ENCODE measurements at regions of chr11 and their contacts with region 1.

Region 1: GRCh38 chr11:57249384-57250319 is 12.6 kb upstream of the APLNR start:
- DNase-seq: no peak
- ATAC-seq: peak; percentile 78
- H3K4me3 ChIP-seq: no peak overlapping the region
- H3K27ac ChIP-seq: no peak overlapping the region
- H3K4me1 ChIP-seq: no peaks in the 10 kb centered on the region
- H3K27me3 ChIP-seq: no peaks in the 10 kb centered on the region; a peak in 1 of 4 replicates
- CTCF ChIP-seq: peak; percentile 76 to 84 (median 83)
- EP300 ChIP-seq: no peak
- POLR2A ChIP-seq: no peak
- RAD21 ChIP-seq: peak; percentile 77

Region 2: GRCh38 chr11:55942785-55943392 is 1306.8 kb before region 1 on chr11:
- CTCF ChIA-PET with region 1: interaction called, 5 read pairs
- POLR2A ChIA-PET with region 1: no interaction called
- RAD21 ChIA-PET with region 1: no interaction called
- SMC1A ChIA-PET with region 1: no interaction called
- in situ Hi-C with region 1: loop called (anchors 25 kb)
- intact Hi-C with region 1: loop called (anchors 2 kb)
- DNase-seq: no peak
- ATAC-seq: peak; percentile 61; the same call in 2 of the 3 replicates
- H3K4me3 ChIP-seq: no peak overlapping the region
- H3K27ac ChIP-seq: no peak overlapping the region
- H3K4me1 ChIP-seq: no peaks in the 10 kb centered on the region
- H3K27me3 ChIP-seq: no peaks in the 10 kb centered on the region
- CTCF ChIP-seq: peak; percentile 37 to 61 (median 38); a peak in 4 of 6 replicates
- EP300 ChIP-seq: no peak
- POLR2A ChIP-seq: no peak
- RAD21 ChIP-seq: peak; percentile 58

Region 3: DNA sequence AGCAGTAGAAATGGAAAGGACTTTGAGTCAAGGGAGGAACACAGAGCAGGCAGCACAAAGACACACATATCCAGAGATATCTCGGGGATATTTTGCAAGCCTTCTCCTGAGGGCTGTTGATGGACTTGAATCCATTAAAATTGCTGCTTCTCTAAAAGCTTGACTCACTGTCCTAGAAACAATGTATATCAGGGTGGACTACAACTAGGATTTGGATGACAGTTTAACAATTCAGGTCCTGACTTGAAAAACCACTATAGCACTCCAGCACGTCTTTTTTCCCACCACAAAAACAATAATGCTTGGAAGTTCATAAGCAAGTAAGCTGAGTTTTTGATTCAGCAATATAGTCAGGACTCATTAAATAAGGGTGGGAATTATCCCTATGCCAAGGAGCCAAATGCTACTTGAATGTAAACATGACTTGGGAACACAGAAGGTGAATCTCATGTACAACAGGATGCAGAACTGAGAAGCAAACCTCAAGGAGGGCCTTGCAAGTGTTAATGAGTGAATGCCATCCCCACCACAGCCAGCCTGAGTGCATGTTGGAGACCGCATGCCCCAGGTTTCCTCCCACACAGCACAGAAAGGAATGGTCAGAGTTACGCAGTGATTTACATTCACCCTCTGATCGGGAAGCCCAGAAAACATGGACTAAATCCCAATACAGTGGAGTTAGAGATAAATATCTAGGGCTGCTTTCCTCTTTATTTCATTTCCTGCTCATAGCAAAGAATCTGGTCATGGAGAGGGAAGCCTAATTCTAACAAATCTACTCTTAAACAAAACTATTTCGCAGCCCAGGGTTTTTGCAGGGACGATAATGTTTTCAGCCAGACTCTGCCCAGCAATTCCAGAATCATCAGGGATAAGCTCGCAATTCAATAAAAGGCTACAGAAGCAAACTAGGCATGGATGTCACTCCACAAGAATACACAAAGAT is 402.7 kb before region 1 on chr11:
- CTCF ChIA-PET with region 1: interaction called, 184 read pairs
- POLR2A ChIA-PET with region 1: no interaction called
- RAD21 ChIA-PET with region 1: interaction called, 75 read pairs
- SMC1A ChIA-PET with region 1: interaction called, 61 read pairs
- in situ Hi-C with region 1: loop called (anchors 5 kb)
- intact Hi-C with region 1: no loop called
- DNase-seq: no peak
- ATAC-seq: no peak
- H3K4me3 ChIP-seq: no peak overlapping the region
- H3K27ac ChIP-seq: no peak overlapping the region
- H3K4me1 ChIP-seq: no peaks in the 10 kb centered on the region
- H3K27me3 ChIP-seq: no peaks in the 10 kb centered on the region
- CTCF ChIP-seq: no peak
- EP300 ChIP-seq: no peak
- POLR2A ChIP-seq: no peak
- RAD21 ChIP-seq: no peak

Region 4: DNA sequence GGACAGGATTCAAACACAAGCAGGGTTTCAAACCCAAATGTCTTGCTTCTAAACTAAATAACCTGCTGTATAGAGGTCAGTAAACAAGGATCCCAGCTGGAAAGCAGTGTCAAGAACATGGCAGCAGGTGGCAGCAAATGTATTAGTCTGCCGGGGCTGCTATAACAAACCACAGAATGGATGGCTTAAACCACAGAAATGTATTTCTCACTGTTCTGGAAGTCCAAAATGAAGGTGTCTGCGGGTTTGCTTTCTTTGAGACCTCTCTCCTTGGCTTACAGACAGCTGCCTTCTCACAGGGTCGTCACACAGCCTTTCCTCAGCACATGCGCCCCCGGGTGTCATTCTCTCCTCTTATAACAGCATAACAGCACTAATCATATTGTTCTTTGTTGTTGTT is 133.0 kb before region 1 on chr11:
- CTCF ChIA-PET with region 1: interaction called, 83 read pairs
- POLR2A ChIA-PET with region 1: no interaction called
- RAD21 ChIA-PET with region 1: interaction called, 23 read pairs
- SMC1A ChIA-PET with region 1: interaction called, 19 read pairs
- in situ Hi-C with region 1: loop called (anchors 5 kb)
- intact Hi-C with region 1: loop called (anchors 1 kb)
- DNase-seq: no peak
- ATAC-seq: peak; percentile 82
- H3K4me3 ChIP-seq: no peak overlapping the region
- H3K27ac ChIP-seq: no peak overlapping the region
- H3K4me1 ChIP-seq: no peaks in the 10 kb centered on the region
- H3K27me3 ChIP-seq: no peaks in the 10 kb centered on the region; a peak in 1 of 4 replicates
- CTCF ChIP-seq: peak; percentile 50 to 59 (median 50)
- EP300 ChIP-seq: no peak
- POLR2A ChIP-seq: no peak
- RAD21 ChIP-seq: peak; percentile 56

Region 5: GRCh38 chr11:57131080-57131790 is 118.4 kb before region 1 on chr11:
- CTCF ChIA-PET with region 1: interaction called, 13 read pairs
- POLR2A ChIA-PET with region 1: no interaction called
- RAD21 ChIA-PET with region 1: interaction called, 4 read pairs
- SMC1A ChIA-PET with region 1: interaction called, 8 read pairs
- in situ Hi-C with region 1: no loop called
- intact Hi-C with region 1: loop called (anchors 1 kb)
- DNase-seq: no peak
- ATAC-seq: peak; percentile 47; the same call in 1 of the 3 replicates
- H3K4me3 ChIP-seq: no peak overlapping the region
- H3K27ac ChIP-seq: no peak overlapping the region
- H3K4me1 ChIP-seq: no peaks in the 10 kb centered on the region
- H3K27me3 ChIP-seq: peaks cover 1 to 2% of the 10 kb centered on the region in 2 experiments; a peak in 2 of 4 replicates
- CTCF ChIP-seq: peak; percentile 21 to 34 (median 26); a peak in 3 of 6 replicates
- EP300 ChIP-seq: no peak
- POLR2A ChIP-seq: no peak
- RAD21 ChIP-seq: peak; percentile 43

Region 6: GRCh38 chr11:57260937-57261783 is 11.5 kb after region 1 on chr11:
- CTCF ChIA-PET with region 1: interaction called, 14 read pairs
- POLR2A ChIA-PET with region 1: no interaction called
- RAD21 ChIA-PET with region 1: no interaction called
- SMC1A ChIA-PET with region 1: interaction called, 17 read pairs
- in situ Hi-C with region 1: no loop called
- intact Hi-C with region 1: no loop called
- DNase-seq: no peak
- ATAC-seq: peak; percentile 30
- H3K4me3 ChIP-seq: no peak overlapping the region
- H3K27ac ChIP-seq: no peak overlapping the region
- H3K4me1 ChIP-seq: no peaks in the 10 kb centered on the region
- H3K27me3 ChIP-seq: no peaks in the 10 kb centered on the region
- CTCF ChIP-seq: no peak
- EP300 ChIP-seq: no peak
- POLR2A ChIP-seq: no peak
- RAD21 ChIP-seq: no peak

Region 7: DNA sequence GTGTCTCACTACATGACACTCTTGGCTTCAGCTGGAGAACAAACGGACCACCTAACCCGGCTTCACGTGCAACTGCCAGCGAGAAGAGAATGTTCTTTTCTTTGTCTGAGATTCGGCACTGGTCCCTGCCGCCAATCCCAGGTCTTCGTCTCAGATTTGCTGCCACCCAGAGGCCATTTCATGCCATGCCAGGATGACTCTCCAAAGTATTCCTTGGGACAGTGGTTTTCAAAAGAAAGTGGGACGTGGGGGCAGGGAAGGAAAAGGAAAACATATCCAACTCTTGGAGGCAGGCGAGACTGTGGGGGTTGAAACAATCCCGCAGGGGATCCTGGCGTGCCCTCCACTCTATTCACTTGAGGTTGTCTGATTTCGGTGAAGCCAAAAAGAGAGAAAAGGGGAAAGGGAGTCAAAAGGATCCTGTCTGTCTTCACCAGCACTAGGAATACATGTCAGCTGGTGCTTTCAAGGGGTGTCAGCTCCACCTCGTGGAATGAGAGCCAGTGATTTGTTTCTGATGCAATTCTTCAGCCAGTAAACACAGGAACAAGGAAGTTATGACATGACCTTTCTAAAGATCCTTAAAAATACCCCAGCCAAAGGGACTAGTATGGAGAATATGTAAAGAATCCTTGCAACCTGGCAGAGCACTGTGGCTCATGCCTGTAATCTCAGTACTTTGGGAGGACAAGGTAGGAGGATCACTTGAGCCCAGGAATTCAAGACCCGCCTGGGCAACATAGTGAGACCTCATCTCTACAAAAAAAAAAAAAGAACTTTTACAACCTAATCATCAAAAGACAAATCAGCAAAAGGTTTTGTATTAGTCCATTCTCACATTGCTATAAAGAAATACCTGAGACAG is 28.4 kb after region 1 on chr11:
- CTCF ChIA-PET with region 1: interaction called, 16 read pairs
- POLR2A ChIA-PET with region 1: no interaction called
- RAD21 ChIA-PET with region 1: interaction called, 5 read pairs
- SMC1A ChIA-PET with region 1: interaction called, 3 read pairs
- in situ Hi-C with region 1: no loop called
- intact Hi-C with region 1: no loop called
- DNase-seq: no peak
- ATAC-seq: peak; percentile 90
- H3K4me3 ChIP-seq: no peak overlapping the region
- H3K27ac ChIP-seq: no peak overlapping the region
- H3K4me1 ChIP-seq: no peaks in the 10 kb centered on the region
- H3K27me3 ChIP-seq: peaks cover 0 to 5% of the 10 kb centered on the region in 2 experiments; a peak in 1 of 4 replicates
- CTCF ChIP-seq: peak; percentile 79 to 84 (median 83)
- EP300 ChIP-seq: no peak
- POLR2A ChIP-seq: no peak
- RAD21 ChIP-seq: peak; percentile 64

Region 8: GRCh38 chr11:57453543-57454177 is 204.0 kb after region 1 on chr11:
- CTCF ChIA-PET with region 1: no interaction called
- POLR2A ChIA-PET with region 1: no interaction called
- RAD21 ChIA-PET with region 1: no interaction called
- SMC1A ChIA-PET with region 1: no interaction called
- in situ Hi-C with region 1: no loop called
- intact Hi-C with region 1: no loop called
- DNase-seq: no peak
- ATAC-seq: no peak
- H3K4me3 ChIP-seq: no peak overlapping the region
- H3K27ac ChIP-seq: no peak overlapping the region
- H3K4me1 ChIP-seq: peaks cover 7% of the 10 kb centered on the region
- H3K27me3 ChIP-seq: no peaks in the 10 kb centered on the region; a peak in 2 of 4 replicates
- CTCF ChIP-seq: no peak
- EP300 ChIP-seq: no peak
- POLR2A ChIP-seq: no peak
- RAD21 ChIP-seq: no peak

Measured in GM12878 (cell line).